ENCODE measurements at regions of chr11 and their contacts with region 1.

Region 1: DNA sequence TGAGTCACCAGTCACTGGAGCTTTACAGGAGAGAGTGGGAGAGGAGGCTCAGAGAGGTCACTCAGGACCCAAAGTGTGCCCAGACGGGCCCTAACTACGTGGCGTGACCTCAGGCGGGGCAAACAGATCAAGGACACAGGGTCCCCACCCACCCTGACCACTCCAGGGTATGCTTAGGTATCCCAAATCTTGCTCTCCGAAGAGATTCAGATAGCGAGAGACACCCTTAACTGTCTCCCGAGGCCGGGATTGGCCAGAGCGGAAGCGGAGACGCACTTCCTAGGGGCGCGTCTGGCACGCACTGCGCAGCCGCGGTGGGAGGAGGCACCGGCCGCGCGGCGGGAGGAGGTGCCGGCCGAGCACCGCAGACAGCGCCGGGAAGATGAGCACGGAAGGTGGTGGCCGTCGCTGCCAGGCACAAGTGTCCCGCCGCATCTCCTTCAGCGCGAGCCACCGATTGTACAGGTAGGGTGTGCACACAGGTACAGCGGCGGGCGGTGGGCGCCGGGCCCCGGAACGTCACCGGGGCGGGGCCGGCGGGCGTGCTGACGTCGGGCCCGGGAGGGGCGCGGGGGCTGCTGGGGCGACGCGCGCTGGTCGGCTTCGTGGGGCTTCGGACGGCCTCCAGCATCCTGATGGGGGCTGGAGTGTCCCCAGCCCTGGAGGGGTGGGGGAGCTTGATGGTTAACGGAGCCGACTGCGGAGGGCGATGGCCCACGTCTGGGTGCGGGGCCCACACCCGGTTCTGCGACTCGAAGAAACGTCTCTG is at the start of gene PTS:
- DNase-seq: peak; percentile 79 to 90 (median 88)
- ATAC-seq: peak; percentile 94
- H3K4me3 ChIP-seq: peak within 1 kb of the TSS; percentile 100
- H3K4me3 Mint-ChIP-seq: peak within 1 kb of the TSS; percentile 83 to 95 (median 91)
- H3K27ac ChIP-seq: peak within 1 kb of the TSS; percentile 95
- H3K27ac Mint-ChIP-seq: peak within 1 kb of the TSS; percentile 92 to 99 (median 98)
- H3K4me1 ChIP-seq: peaks cover 9% of the 10 kb centered on the region in 2 donors
- H3K4me1 Mint-ChIP-seq: peaks cover 11 to 38% (median 30%) of the 10 kb centered on the region in 7 donors
- H3K27me3 ChIP-seq: no peaks in the 10 kb centered on the region
- H3K27me3 Mint-ChIP-seq: peaks cover 0 to 2% (median 0%) of the 10 kb centered on the region in 5 donors
- total RNA-seq, gene PTS: 19.2 to 71.3 (median 24.0) TPM

Region 2: GRCh38 chr11:111766093-111766833 is 460.0 kb before region 1 on chr11 and contains the start of gene PPP2R1B:
- CTCF ChIA-PET with region 1: no interaction called
- POLR2A ChIA-PET with region 1: no interaction called
- intact Hi-C with region 1: loop called in 1 of 2 experiments (anchors 1 kb)
- DNase-seq: peak; percentile 50 to 78 (median 69)
- ATAC-seq: peak; percentile 98
- H3K4me3 ChIP-seq: peak within 1 kb of the TSS; percentile 95
- H3K4me3 Mint-ChIP-seq: peak within 1 kb of the TSS; percentile 94 to 100 (median 98)
- H3K27ac ChIP-seq: peak within 1 kb of the TSS; percentile 86
- H3K27ac Mint-ChIP-seq: peak within 1 kb of the TSS; percentile 83 to 99 (median 95)
- H3K4me1 ChIP-seq: peaks cover 7% of the 10 kb centered on the region in 2 donors
- H3K4me1 Mint-ChIP-seq: peaks cover 25 to 48% (median 38%) of the 10 kb centered on the region in 7 donors
- H3K27me3 ChIP-seq: no peaks in the 10 kb centered on the region
- H3K27me3 Mint-ChIP-seq: no peaks in the 10 kb centered on the region
- total RNA-seq, gene PPP2R1B: 25.8 to 49.2 (median 34.0) TPM

Region 3: DNA sequence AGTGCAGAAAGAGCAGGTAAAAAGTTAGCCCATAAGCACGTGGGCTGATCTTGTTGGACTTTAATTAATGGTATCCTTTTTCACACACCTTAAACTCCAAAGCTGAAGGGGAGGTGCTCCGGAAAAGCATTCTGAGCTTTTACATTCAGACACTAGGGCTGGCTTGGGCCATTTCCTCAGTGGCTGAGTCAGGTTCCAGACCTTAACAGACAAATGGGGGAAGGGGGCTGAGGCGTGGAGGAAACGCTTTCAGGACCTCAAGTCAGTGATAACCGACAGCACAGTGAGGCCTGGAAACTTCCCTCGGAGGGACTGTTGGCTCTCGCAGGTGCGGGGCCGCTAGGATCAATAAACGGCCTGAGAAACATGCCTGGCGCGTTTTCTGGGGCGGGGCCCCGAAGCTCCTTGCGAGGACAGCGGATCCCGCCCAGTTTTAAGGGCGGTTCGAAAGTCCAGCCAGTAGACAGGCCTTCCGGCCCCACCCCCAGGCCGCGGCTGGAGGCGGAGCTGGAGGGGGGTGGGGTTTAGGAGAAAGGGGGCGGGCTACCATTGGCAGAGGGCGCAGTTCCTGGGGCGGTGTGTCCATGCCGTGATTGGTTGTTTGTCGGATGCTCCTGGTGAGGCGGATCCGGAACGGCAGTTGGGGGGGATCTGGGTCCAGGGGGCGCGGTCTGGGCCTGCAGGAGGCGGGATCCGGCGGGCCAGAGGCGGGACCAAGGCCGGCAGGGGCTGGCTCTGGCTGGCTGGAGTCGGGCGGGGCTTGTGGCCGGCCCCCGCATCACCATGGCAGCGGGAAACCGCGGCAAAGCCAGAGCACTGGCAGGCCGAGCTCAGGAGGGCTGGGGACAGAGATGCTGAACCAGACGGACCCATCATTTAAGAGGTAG is 299.5 kb before region 1 on chr11:
- CTCF ChIA-PET with region 1: no interaction called
- POLR2A ChIA-PET with region 1: no interaction called
- intact Hi-C with region 1: loop called in 1 of 2 experiments (anchors 2 kb)
- DNase-seq: peak; percentile 91 to 98 (median 96)
- ATAC-seq: peak; percentile 96
- H3K4me3 ChIP-seq: peak overlapping the region; percentile 61
- H3K4me3 Mint-ChIP-seq: peak overlapping the region; percentile 76 to 91 (median 87)
- H3K27ac ChIP-seq: peak overlapping the region; percentile 76
- H3K27ac Mint-ChIP-seq: peak overlapping the region; percentile 83 to 96 (median 92)
- H3K4me1 ChIP-seq: peaks cover 0 to 5% of the 10 kb centered on the region in 2 donors
- H3K4me1 Mint-ChIP-seq: peaks cover 0 to 19% (median 16%) of the 10 kb centered on the region in 7 donors
- H3K27me3 ChIP-seq: no peaks in the 10 kb centered on the region
- H3K27me3 Mint-ChIP-seq: peaks cover 0 to 5% (median 0%) of the 10 kb centered on the region in 5 donors

Region 4: GRCh38 chr11:112074026-112074811 is 152.0 kb before region 1 on chr11 and contains the start of gene NKAPD1:
- CTCF ChIA-PET with region 1: no interaction called
- POLR2A ChIA-PET with region 1: no interaction called
- intact Hi-C with region 1: loop called in 1 of 2 experiments (anchors 1 kb)
- DNase-seq: peak; percentile 64 to 88 (median 84)
- ATAC-seq: peak; percentile 94
- H3K4me3 ChIP-seq: peak within 1 kb of the TSS; percentile 97
- H3K4me3 Mint-ChIP-seq: peak within 1 kb of the TSS; percentile 80 to 98 (median 94)
- H3K27ac ChIP-seq: peak within 1 kb of the TSS; percentile 79
- H3K27ac Mint-ChIP-seq: peak within 1 kb of the TSS; percentile 84 to 96 (median 95)
- H3K4me1 ChIP-seq: peaks cover 5 to 11% of the 10 kb centered on the region in 2 donors
- H3K4me1 Mint-ChIP-seq: peaks cover 14 to 49% (median 40%) of the 10 kb centered on the region in 7 donors
- H3K27me3 ChIP-seq: no peaks in the 10 kb centered on the region
- H3K27me3 Mint-ChIP-seq: peaks cover 6 to 22% (median 12%) of the 10 kb centered on the region in 5 donors
- total RNA-seq, gene NKAPD1: 12.4 to 22.9 (median 19.7) TPM

Region 5: DNA sequence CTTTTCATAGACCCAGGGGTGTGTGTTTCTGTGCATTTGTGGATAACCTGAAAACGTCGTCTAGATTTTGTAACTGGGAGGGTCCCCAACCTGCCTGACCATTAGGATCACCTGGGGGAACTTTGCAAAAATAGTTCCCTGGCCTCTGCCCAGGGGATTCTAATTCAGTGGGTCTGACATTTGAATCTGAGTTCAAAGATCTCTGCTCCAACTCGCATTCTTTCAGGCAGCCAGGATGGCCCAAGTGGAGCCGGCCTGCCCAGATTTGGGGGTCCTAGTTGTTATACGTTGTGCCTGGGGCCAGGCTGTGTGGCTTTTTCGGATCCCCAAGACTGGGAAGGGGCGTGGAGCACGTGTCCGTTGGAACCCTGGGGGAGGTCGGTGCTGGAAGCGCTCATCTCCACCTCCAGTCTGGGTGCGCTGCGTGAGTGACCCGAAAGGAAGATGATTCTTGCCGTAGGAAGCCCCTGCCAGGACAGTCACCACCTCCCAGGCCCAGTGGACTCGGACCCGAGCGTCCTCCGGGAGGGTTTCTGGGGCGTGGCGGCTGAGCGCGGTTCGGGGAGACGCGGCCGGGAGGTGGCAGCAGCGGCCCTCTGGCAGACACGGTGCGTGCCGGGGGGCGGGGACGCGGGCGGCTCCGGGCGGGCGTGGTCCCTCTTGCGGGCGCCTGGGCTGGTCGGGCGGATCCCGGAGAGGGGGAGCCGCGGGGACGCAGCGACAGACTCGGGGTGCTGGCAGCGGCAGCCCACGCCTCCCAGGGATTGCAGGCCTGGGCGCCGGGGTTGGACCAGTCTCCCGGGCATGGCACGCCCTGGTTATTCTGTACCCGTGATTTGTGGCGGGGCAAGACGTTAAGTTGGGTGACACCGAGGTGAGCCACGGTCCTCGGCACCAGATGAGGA is 63.6 kb after region 1 on chr11:
- CTCF ChIA-PET with region 1: interaction called, 141 read pairs
- POLR2A ChIA-PET with region 1: interaction called, 9 read pairs
- intact Hi-C with region 1: loop called in 1 of 2 experiments (anchors 1 kb)
- DNase-seq: peak; percentile 77 to 90 (median 86)
- ATAC-seq: peak; percentile 99
- H3K4me3 ChIP-seq: peak overlapping the region; percentile 61
- H3K4me3 Mint-ChIP-seq: peak overlapping the region; percentile 74 to 87 (median 84)
- H3K27ac ChIP-seq: peak overlapping the region; percentile 66
- H3K27ac Mint-ChIP-seq: peak overlapping the region; percentile 0 to 88 (median 51)
- H3K4me1 ChIP-seq: peaks cover 0 to 5% of the 10 kb centered on the region in 2 donors
- H3K4me1 Mint-ChIP-seq: peaks cover 9 to 44% (median 38%) of the 10 kb centered on the region in 7 donors
- H3K27me3 ChIP-seq: no peaks in the 10 kb centered on the region
- H3K27me3 Mint-ChIP-seq: peaks cover 0 to 9% (median 0%) of the 10 kb centered on the region in 5 donors

Region 6: DNA sequence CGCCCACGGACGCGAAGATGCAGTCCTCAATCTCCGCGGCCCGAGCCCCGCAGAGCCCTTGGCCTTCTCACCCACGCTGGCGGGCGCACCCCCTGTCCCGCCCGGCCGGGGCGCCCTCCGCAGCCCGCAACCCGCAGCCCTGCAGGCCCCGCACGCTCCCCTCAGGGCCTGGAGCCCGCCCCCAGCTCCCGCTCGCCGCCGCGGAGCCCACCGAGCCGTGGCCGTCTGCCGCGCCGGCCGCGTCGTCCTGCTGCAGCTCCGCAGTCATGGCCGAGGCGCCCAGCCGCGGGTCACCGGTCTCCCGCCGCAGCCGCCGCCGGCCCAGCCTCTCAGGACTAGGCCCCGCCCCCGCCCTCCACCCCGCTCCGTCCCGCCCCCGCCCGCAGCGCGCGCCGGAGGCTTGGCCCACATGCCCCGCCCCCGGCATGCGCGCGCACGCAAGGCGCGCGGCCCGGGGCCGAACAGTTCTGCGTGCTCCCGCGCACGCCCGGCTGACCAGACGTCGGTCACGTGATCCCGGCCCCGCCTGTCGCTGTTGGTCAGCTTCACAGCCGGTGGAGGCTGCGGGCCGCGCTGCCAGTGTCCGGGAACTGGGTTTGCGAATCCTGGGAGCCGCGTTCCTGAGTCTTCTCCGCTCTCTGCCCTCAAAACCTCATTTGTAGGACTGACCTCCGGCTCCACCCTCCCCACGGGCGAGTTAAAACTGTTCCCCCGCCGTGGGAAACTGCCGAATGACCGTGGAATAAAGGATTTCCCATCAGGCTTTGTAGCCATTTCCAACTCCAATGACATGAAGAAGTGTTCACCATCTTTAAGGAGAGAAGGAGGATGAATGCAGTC is 1649.2 kb after region 1 on chr11 and contains the start of gene USP28:
- CTCF ChIA-PET with region 1: no interaction called
- POLR2A ChIA-PET with region 1: no interaction called
- intact Hi-C with region 1: loop called in 1 of 2 experiments (anchors 5 kb)
- DNase-seq: peak; percentile 49 to 92 (median 73)
- ATAC-seq: peak; percentile 97
- H3K4me3 ChIP-seq: peak within 1 kb of the TSS; percentile 79
- H3K4me3 Mint-ChIP-seq: peak within 1 kb of the TSS; percentile 88 to 100 (median 98)
- H3K27ac ChIP-seq: peak within 1 kb of the TSS; percentile 78
- H3K27ac Mint-ChIP-seq: peak within 1 kb of the TSS; percentile 91 to 99 (median 98)
- H3K4me1 ChIP-seq: no peaks in the 10 kb centered on the region
- H3K4me1 Mint-ChIP-seq: peaks cover 34 to 59% (median 54%) of the 10 kb centered on the region in 7 donors
- H3K27me3 ChIP-seq: no peaks in the 10 kb centered on the region
- H3K27me3 Mint-ChIP-seq: no peaks in the 10 kb centered on the region
- total RNA-seq, gene USP28: 12.0 to 50.3 (median 19.0) TPM

Measured in naive thymus-derived CD4-positive, alpha-beta T cell (primary cell).